ENCODE measurements at regions of chr7 and their contacts with region 1.

Region 1: GRCh38 chr7:39580149-39580874 is 14.1 kb downstream of the YAE1 start:
- DNase-seq: peak; percentile 44 to 91 (median 77)
- ATAC-seq: peak; percentile 97
- H3K4me3 ChIP-seq: no peak overlapping the region
- H3K4me3 Mint-ChIP-seq: no peak overlapping the region
- H3K27ac ChIP-seq: no peak overlapping the region
- H3K27ac Mint-ChIP-seq: peak overlapping the region; percentile 7
- H3K4me1 ChIP-seq: no peaks in the 10 kb centered on the region
- H3K4me1 Mint-ChIP-seq: peaks cover 6% of the 10 kb centered on the region
- H3K27me3 ChIP-seq: no peaks in the 10 kb centered on the region
- H3K27me3 Mint-ChIP-seq: no peaks in the 10 kb centered on the region
- CTCF ChIP-seq: peak; percentile 91

Region 2: DNA sequence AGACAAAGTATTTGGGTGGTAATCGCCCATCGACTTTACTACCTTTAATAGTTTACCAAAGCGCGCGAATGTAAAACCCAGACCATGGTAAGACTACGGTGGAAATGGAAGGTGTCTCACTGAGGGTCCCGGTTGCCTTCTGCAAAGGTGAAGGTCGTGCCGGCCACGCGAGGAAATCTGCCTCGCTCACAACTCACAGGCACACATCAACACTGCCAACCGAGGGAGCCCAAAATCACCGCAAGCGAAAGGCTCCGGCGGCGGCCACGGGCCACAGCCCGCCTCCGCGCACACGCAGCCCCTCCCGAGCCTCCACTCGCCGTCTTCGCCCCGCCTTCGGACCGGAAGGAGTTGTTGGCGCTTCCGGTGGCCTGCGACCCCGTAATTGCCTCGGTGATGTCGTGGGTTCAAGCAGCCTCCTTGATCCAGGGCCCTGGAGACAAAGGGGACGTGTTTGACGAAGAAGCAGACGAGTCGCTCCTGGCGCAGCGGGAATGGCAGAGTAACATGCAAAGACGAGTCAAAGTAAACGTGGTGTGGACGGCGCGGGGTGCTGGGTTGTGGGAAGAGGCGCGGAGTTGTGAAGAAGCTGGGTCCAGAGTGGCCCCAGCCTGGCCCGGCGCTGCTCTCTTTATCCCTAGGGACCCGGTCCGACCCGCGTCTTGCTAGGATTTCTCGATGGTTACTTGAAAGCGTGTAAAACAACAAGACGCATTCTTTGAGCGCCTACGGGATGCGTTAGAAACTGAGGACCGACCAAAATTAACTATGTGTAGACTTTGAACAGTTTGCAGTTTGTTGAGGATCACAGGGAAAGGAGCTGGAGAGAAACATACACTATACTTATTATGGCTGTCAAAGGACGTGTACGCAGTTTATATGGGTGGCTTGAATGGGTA is 14.0 kb before region 1 on chr7 and contains the start of gene YAE1:
- CTCF ChIA-PET with region 1: interaction called, 9 read pairs
- POLR2A ChIA-PET with region 1: interaction called, 3 read pairs
- intact Hi-C with region 1: loop called in 1 of 2 experiments (anchors 1 kb)
- DNase-seq: peak; percentile 60 to 89 (median 81)
- ATAC-seq: peak; percentile 91
- H3K4me3 ChIP-seq: peak within 1 kb of the TSS; percentile 83 to 86
- H3K4me3 Mint-ChIP-seq: peak within 1 kb of the TSS; percentile 99
- H3K27ac ChIP-seq: peak within 1 kb of the TSS; percentile 79 to 80
- H3K27ac Mint-ChIP-seq: peak within 1 kb of the TSS; percentile 99
- H3K4me1 ChIP-seq: peaks cover 9% of the 10 kb centered on the region
- H3K4me1 Mint-ChIP-seq: peaks cover 35% of the 10 kb centered on the region
- H3K27me3 ChIP-seq: no peaks in the 10 kb centered on the region
- H3K27me3 Mint-ChIP-seq: no peaks in the 10 kb centered on the region
- CTCF ChIP-seq: no peak
- total RNA-seq, gene YAE1: 5.2 to 8.8 TPM

Region 3: DNA sequence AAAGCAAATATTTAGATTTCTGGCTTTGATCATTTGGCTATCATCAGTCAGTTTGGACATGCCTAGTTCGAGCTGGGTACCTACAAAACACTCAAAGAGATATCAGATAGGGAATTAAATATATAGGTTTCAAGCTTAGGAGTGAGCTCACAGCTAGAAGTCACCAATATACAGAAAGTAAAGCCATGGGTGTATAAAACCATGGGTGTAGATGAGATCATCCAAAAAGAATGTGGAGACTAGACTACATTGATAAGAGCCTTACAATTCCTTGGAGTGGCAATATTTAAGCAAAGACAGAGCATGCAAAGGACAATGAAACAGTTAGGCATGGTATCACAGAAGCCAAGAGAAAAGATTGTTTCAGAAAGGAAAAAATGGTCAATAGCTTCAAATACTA is 35.8 kb after region 1 on chr7:
- CTCF ChIA-PET with region 1: interaction called, 40 read pairs
- POLR2A ChIA-PET with region 1: no interaction called
- intact Hi-C with region 1: no loop called
- DNase-seq: no peak
- ATAC-seq: no peak
- H3K4me3 ChIP-seq: no peak overlapping the region
- H3K4me3 Mint-ChIP-seq: no peak overlapping the region
- H3K27ac ChIP-seq: no peak overlapping the region
- H3K27ac Mint-ChIP-seq: no peak overlapping the region
- H3K4me1 ChIP-seq: no peaks in the 10 kb centered on the region
- H3K4me1 Mint-ChIP-seq: no peaks in the 10 kb centered on the region
- H3K27me3 ChIP-seq: peaks cover 0 to 8% of the 10 kb centered on the region in 2 experiments
- H3K27me3 Mint-ChIP-seq: peaks cover 13% of the 10 kb centered on the region
- CTCF ChIP-seq: no peak

Region 4: GRCh38 chr7:39732837-39733804 is 152.8 kb after region 1 on chr7:
- CTCF ChIA-PET with region 1: interaction called, 556 read pairs
- POLR2A ChIA-PET with region 1: interaction called, 9 read pairs
- intact Hi-C with region 1: no loop called
- DNase-seq: peak; percentile 84 to 98 (median 95)
- ATAC-seq: peak; percentile 92
- H3K4me3 ChIP-seq: peak overlapping the region; percentile 79 to 85
- H3K4me3 Mint-ChIP-seq: peak overlapping the region; percentile 91
- H3K27ac ChIP-seq: peak overlapping the region; percentile 66 to 91
- H3K27ac Mint-ChIP-seq: peak overlapping the region; percentile 94
- H3K4me1 ChIP-seq: peaks cover 26% of the 10 kb centered on the region
- H3K4me1 Mint-ChIP-seq: peaks cover 40% of the 10 kb centered on the region
- H3K27me3 ChIP-seq: no peaks in the 10 kb centered on the region
- H3K27me3 Mint-ChIP-seq: no peaks in the 10 kb centered on the region
- CTCF ChIP-seq: no peak

Region 5: DNA sequence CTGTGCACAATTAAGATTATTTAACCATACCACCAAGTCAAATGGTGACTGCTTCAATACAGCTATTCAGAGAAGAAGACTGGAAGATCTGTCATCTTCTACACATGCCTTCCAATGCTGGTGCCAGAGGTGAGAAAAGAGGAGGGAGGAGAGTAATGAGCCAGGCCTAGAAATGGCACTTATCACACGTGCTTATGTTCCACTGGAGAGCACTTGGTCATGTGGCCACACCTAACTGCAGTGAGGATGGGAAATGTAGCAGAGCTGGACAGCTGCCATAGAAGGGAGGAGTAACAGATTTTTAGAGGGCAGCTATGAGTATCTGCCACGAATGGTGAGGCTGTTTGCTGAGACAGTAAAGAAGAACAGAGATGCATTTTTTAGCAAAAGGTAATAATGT is 477.0 kb after region 1 on chr7:
- CTCF ChIA-PET with region 1: interaction called, 7 read pairs
- POLR2A ChIA-PET with region 1: no interaction called
- intact Hi-C with region 1: loop called (anchors 1 kb)
- DNase-seq: no peak
- ATAC-seq: no peak
- H3K4me3 ChIP-seq: no peak overlapping the region
- H3K4me3 Mint-ChIP-seq: no peak overlapping the region
- H3K27ac ChIP-seq: no peak overlapping the region
- H3K27ac Mint-ChIP-seq: no peak overlapping the region
- H3K4me1 ChIP-seq: no peaks in the 10 kb centered on the region
- H3K4me1 Mint-ChIP-seq: peaks cover 8% of the 10 kb centered on the region
- H3K27me3 ChIP-seq: no peaks in the 10 kb centered on the region
- H3K27me3 Mint-ChIP-seq: no peaks in the 10 kb centered on the region
- CTCF ChIP-seq: no peak

Measured in CD8-positive, alpha-beta T cell (primary cell).